HepG2 (cell line): ENCODE measurements at regions of chr14 and their contacts with region 1.

Region 1: DNA sequence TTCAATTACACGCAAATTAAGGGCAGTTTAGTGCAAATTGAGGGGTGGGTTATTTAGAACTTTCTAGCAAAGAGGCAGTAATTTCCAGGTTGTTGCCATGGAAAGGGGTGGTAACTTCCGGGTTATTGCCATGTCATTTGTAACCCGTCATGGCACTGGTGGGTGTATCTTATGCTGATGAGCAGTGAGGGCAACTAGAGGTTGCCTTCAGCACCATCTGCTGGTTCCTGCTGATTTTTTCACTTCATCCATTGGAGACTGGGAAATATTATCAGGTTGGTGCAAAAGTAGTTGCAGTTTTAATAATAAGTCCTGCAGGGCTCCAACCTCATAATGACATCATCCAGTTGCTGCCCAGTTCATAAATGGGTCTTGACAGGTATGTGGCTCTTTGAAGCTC is 24.4 kb upstream of the SERPINA4 start:
- DNase-seq: peak; percentile 71
- ATAC-seq: peak; percentile 64
- H3K4me3 ChIP-seq: no peak overlapping the region
- H3K27ac ChIP-seq: no peak overlapping the region
- H3K4me1 ChIP-seq: peaks cover 69% of the 10 kb centered on the region
- H3K27me3 ChIP-seq: no peaks in the 10 kb centered on the region
- CTCF ChIP-seq: peak; percentile 72
- EP300 ChIP-seq: no peak
- POLR2A ChIP-seq: no peak
- RAD21 ChIP-seq: peak; percentile 63

Region 2: DNA sequence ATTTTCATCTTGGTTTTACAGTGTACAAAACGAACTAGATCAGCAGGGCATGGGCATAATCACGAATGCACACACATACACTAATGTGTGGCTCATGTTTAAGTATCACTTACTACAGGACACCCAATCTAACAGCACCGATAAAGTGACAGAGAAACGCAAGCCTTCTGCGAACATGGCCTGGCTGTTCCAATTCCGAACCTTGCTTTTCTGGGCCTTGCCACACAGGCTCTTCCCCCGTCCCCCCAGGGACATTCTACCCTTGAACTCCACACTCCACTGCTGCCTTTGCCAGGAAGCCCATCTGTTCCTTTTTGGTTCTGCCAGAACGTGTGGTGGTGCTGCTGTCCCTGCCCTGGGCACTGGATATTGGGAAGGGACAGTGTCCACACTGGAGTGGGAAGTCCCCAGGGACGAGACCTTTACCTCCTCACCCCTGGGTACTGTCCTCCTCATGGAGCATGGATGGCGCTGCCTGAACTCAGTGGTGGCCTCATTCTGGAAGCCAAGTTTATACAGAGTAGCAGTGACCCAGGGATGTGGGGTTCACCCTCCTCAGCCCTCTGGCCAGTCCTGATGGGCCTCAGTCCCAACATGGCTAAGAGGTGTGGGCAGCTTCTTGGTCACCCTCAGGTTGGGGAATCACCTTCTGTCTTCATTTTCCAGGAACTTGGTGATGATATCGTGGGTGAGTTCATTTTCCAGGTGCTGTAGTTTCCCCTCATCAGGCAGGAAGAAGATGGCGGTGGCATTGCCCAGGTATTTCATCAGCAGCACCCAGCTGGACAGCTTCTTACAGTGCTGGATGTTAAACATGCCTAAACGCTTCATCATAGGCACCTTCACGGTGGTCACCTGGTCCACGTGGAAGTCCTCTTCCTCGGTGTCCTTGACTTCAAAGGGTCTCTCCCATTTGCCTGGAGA is 156.3 kb before region 1 on chr14:
- CTCF ChIA-PET with region 1: no interaction called
- POLR2A ChIA-PET with region 1: no interaction called
- in situ Hi-C with region 1: no loop called
- intact Hi-C with region 1: no loop called
- DNase-seq: no peak
- ATAC-seq: no peak
- H3K4me3 ChIP-seq: no peak overlapping the region
- H3K27ac ChIP-seq: no peak overlapping the region
- H3K4me1 ChIP-seq: peaks cover 100% of the 10 kb centered on the region
- H3K27me3 ChIP-seq: no peaks in the 10 kb centered on the region
- CTCF ChIP-seq: no peak
- EP300 ChIP-seq: no peak
- POLR2A ChIP-seq: peak; percentile 56 to 60; a peak in 3 of 4 replicates
- RAD21 ChIP-seq: no peak

Region 3: DNA sequence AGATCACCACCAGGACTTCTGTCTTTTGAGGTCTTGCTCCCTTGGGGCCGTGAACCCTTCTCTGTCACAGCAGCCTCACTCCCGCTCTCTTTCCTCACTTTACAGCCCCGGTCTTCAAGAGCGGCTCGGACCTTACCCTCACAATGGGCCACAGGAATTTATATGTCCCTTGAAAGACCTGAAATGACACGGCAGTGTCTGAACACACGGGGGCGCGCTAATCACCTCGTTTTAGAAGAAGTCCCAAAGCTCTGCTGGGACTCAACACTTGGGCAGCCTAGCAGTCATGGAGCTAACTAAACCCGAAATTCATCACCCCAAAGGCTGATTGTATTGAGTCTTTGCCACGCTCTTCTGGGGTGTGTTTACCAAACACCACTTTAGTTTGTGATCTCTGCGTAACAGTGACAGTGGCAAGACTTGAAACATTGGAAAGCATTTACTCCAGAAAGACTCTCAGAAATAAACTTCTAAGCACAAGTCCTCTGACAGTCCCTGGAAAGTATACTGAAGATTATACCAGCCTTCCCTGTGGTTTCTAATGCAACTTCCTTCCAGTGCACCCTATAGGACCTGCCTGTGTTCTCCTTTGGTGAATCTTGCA is 113.3 kb before region 1 on chr14:
- CTCF ChIA-PET with region 1: interaction called, 6 read pairs
- POLR2A ChIA-PET with region 1: no interaction called
- in situ Hi-C with region 1: no loop called
- intact Hi-C with region 1: loop called (anchors 2 kb)
- DNase-seq: peak; percentile 80
- ATAC-seq: peak; percentile 91
- H3K4me3 ChIP-seq: 0 out of 6 replicates have a peak overlapping the region, but pooled peaks of 1 of the 3 experiments have one; percentile 38
- H3K27ac ChIP-seq: no peak overlapping the region
- H3K4me1 ChIP-seq: peaks cover 32% of the 10 kb centered on the region
- H3K27me3 ChIP-seq: no peaks in the 10 kb centered on the region
- CTCF ChIP-seq: peak; percentile 90
- EP300 ChIP-seq: no peak
- POLR2A ChIP-seq: no peak
- RAD21 ChIP-seq: peak; percentile 76

Region 4: GRCh38 chr14:94485944-94486841 is 50.6 kb before region 1 on chr14:
- CTCF ChIA-PET with region 1: interaction called, 7 read pairs
- POLR2A ChIA-PET with region 1: interaction called, 3 read pairs
- in situ Hi-C with region 1: no loop called
- intact Hi-C with region 1: loop called (anchors 1 kb)
- DNase-seq: peak; percentile 48
- ATAC-seq: peak; percentile 62
- H3K4me3 ChIP-seq: peak overlapping the region in 1 of 3 experiments; percentile 30; a peak in 1 of 6 replicates
- H3K27ac ChIP-seq: peak overlapping the region; percentile 32
- H3K4me1 ChIP-seq: peaks cover 92% of the 10 kb centered on the region
- H3K27me3 ChIP-seq: no peaks in the 10 kb centered on the region
- CTCF ChIP-seq: peak; percentile 96
- EP300 ChIP-seq: 0 out of 4 replicates have a peak, but pooled peaks of 1 of the 2 experiments have one; percentile 9
- POLR2A ChIP-seq: no peak
- RAD21 ChIP-seq: peak; percentile 98

Region 5: GRCh38 chr14:94517641-94518257 is 19.1 kb before region 1 on chr14:
- CTCF ChIA-PET with region 1: interaction called, 4 read pairs
- POLR2A ChIA-PET with region 1: interaction called, 20 read pairs
- in situ Hi-C with region 1: no loop called
- intact Hi-C with region 1: no loop called
- DNase-seq: peak; percentile 77
- ATAC-seq: peak; percentile 9; the same call in 2 of the 3 replicates
- H3K4me3 ChIP-seq: peak overlapping the region in 1 of 3 experiments; percentile 14; a peak in 1 of 6 replicates
- H3K27ac ChIP-seq: peak overlapping the region; percentile 44
- H3K4me1 ChIP-seq: peaks cover 92% of the 10 kb centered on the region
- H3K27me3 ChIP-seq: no peaks in the 10 kb centered on the region
- CTCF ChIP-seq: no peak
- EP300 ChIP-seq: peak in 1 of 2 experiments; percentile 80; a peak in 2 of 4 replicates
- POLR2A ChIP-seq: no peak
- RAD21 ChIP-seq: no peak